ENCODE measurements at regions of chr3 and their contacts with region 1.

Region 1: DNA sequence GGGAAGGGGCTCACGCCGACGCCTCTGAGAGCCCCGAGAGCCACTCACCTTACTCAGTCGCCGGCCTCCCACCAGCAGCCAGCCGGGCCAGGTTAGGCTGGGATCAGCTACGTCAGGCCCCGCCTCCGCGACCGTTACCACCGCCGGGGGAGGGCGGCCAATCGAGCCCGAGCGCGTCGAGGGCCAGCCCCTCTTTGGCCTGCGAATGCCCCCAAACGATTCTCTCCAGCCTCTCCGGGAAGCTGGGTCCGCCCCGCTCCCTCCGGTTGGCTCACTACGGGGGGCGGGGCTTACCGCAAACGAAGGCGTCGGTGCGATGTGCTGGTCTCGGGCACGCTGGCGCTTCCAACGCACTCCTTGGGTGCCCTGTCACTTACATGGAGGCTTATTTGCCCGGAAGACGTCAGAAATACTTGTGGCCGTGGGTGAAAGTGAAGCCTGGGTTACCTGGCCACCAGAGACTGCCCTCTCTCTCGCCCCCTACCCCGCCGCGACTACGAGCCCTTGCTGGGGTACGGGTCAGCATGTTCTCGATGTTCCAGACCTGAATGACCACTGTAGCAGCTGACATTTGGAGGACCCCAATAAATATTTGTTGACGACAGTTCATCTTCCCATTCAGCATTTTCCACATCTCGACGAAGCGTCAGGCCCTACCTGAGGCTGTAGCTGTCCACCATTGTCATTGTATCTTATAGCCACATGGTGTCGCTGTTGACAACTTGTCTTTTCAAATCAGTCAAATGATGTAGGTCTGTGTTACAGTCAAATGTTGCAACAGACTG is at the start of gene CEP70:
- DNase-seq: peak; percentile 93
- ATAC-seq: peak; percentile 91
- H3K4me3 ChIP-seq: peak within 1 kb of the TSS; percentile 91
- H3K27ac ChIP-seq: peak within 1 kb of the TSS; percentile 62
- H3K4me1 ChIP-seq: 0 out of 2 replicates have a peak, but pooled peaks cover 9% of the 10 kb centered on the region
- H3K27me3 ChIP-seq: no peaks in the 10 kb centered on the region
- CTCF ChIP-seq: peak; percentile 84
- total RNA-seq, gene CEP70: 11.3 and 16.7 TPM in 2 replicates

Region 2: GRCh38 chr3:138417559-138417982 is 176.8 kb before region 1 on chr3:
- CTCF ChIA-PET with region 1: no interaction called
- POLR2A ChIA-PET with region 1: no interaction called
- intact Hi-C with region 1: loop called (anchors 5 kb)
- DNase-seq: peak; percentile 80
- ATAC-seq: peak; percentile 96
- H3K4me3 ChIP-seq: no peak overlapping the region
- H3K27ac ChIP-seq: no peak overlapping the region
- H3K4me1 ChIP-seq: no peaks in the 10 kb centered on the region
- H3K27me3 ChIP-seq: no peaks in the 10 kb centered on the region
- CTCF ChIP-seq: peak; percentile 86

Region 3: DNA sequence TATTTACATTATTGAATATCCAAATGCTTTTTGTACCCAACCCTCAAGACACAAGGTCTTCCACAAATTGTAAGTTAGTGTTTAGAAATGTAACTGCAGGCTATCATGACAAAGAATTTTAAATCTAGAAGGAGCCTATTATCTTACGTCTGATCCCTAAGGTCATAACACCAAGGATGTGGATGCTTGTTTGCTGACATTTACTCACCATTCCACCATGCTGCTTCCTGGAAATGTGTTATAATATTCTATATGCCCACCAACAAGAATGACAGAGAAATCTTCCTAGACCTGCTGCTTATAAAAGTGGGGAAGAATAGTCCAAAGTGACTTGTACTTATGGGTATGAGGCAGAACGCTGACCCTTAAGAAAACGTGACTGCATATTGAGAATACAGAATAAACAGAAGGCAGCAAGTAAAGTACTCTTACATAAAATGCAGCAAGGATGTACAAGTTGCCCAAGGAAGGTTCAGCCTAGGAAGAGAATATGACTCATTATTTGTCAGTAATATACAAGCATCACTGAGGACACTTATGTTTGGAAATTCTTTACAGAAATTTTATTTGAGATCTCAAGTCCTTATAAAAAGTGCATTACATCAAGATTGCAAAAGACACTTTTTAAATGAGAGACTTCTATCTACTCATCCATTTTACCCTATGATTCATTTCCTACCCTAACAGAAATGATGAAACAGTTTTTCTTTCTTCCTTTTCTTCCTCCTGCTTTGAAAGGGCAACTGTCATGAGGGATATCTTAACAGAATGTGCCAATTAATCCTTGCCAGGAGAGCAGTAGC is 100.3 kb before region 1 on chr3:
- CTCF ChIA-PET with region 1: no interaction called
- POLR2A ChIA-PET with region 1: no interaction called
- intact Hi-C with region 1: loop called (anchors 5 kb)
- DNase-seq: peak; percentile 75
- ATAC-seq: peak; percentile 92
- H3K4me3 ChIP-seq: no peak overlapping the region
- H3K27ac ChIP-seq: peak overlapping the region; percentile 82
- H3K4me1 ChIP-seq: peaks cover 27% of the 10 kb centered on the region
- H3K27me3 ChIP-seq: no peaks in the 10 kb centered on the region
- CTCF ChIP-seq: no peak

Region 4: GRCh38 chr3:138567401-138567800 is 26.9 kb before region 1 on chr3:
- CTCF ChIA-PET with region 1: no interaction called
- POLR2A ChIA-PET with region 1: no interaction called
- intact Hi-C with region 1: no loop called
- DNase-seq: peak; percentile 16
- ATAC-seq: peak; percentile 42; the same call in 1 of the 2 replicates
- H3K4me3 ChIP-seq: no peak overlapping the region
- H3K27ac ChIP-seq: no peak overlapping the region
- H3K4me1 ChIP-seq: no peaks in the 10 kb centered on the region
- H3K27me3 ChIP-seq: no peaks in the 10 kb centered on the region
- CTCF ChIP-seq: peak; percentile 37

Region 5: DNA sequence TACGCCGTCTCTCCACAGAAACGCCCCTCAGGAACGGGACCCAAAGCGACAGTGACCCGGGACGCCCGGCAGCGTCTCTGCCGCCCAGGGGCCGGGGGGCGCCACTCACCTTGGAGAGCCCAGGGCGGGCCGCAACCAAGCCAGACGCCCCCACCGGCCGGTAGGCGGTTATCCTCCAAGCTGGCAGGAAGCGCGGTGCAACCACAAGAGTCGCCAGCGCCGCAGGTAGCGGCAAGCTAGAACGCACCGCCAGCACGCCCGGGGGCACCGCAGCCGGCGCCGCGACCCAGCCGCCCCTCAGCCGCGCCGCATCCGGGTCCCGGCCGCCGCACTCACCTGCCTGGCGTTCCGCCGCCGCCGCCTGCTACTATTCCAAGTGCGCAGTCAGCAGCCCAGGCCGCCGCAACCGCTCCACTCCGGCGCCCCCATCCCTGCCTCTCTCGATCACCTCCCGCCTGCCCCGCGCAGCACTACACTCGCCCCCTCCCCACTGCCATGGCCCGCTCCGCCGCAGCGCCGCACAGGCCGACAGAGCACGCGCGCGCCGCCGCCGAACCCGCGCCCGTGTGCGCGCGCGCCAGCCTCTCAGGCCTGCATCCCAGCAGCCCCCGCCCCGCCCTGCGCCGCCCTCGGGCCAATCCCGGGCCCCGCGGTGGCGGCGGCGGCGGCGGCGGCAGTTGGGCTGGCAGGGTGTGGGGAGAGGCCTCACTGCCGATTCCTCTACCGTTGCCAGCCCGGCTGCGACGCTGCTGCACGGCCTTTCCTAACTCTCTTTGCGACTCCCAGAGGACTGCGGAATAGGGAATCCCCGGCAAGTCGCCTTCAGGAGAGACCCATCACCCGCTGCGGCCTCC is 240.2 kb after region 1 on chr3 and contains the start of gene PIK3CB:
- CTCF ChIA-PET with region 1: no interaction called
- POLR2A ChIA-PET with region 1: no interaction called
- intact Hi-C with region 1: loop called (anchors 5 kb)
- DNase-seq: peak; percentile 87
- ATAC-seq: peak; percentile 91
- H3K4me3 ChIP-seq: peak within 1 kb of the TSS; percentile 99
- H3K27ac ChIP-seq: peak within 1 kb of the TSS; percentile 73
- H3K4me1 ChIP-seq: peaks cover 5% of the 10 kb centered on the region; the same call in 1 of the 2 replicates
- H3K27me3 ChIP-seq: no peaks in the 10 kb centered on the region
- CTCF ChIP-seq: peak; percentile 37; the same call in 1 of the 2 replicates
- total RNA-seq, gene PIK3CB: 8.3 and 15.7 TPM in 2 replicates

Region 6: GRCh38 chr3:138935848-138936740 is 341.8 kb after region 1 on chr3:
- CTCF ChIA-PET with region 1: interaction called, 12 read pairs
- POLR2A ChIA-PET with region 1: no interaction called
- intact Hi-C with region 1: no loop called
- DNase-seq: peak; percentile 71
- ATAC-seq: peak; percentile 82
- H3K4me3 ChIP-seq: peak overlapping the region; percentile 65
- H3K27ac ChIP-seq: no peak overlapping the region
- H3K4me1 ChIP-seq: peaks cover 4% of the 10 kb centered on the region; the same call in 1 of the 2 replicates
- H3K27me3 ChIP-seq: no peaks in the 10 kb centered on the region
- CTCF ChIP-seq: peak; percentile 69

Measured in PC-3 (cell line).